GM10248 (cell line): ENCODE measurements at regions of chr5 and their contacts with region 1.

Region 1: GRCh38 chr5:65047948-65048690 is 279.4 kb downstream of the CWC27 start:
- DNase-seq: no peak
- CTCF ChIP-seq: no peak

Region 2: DNA sequence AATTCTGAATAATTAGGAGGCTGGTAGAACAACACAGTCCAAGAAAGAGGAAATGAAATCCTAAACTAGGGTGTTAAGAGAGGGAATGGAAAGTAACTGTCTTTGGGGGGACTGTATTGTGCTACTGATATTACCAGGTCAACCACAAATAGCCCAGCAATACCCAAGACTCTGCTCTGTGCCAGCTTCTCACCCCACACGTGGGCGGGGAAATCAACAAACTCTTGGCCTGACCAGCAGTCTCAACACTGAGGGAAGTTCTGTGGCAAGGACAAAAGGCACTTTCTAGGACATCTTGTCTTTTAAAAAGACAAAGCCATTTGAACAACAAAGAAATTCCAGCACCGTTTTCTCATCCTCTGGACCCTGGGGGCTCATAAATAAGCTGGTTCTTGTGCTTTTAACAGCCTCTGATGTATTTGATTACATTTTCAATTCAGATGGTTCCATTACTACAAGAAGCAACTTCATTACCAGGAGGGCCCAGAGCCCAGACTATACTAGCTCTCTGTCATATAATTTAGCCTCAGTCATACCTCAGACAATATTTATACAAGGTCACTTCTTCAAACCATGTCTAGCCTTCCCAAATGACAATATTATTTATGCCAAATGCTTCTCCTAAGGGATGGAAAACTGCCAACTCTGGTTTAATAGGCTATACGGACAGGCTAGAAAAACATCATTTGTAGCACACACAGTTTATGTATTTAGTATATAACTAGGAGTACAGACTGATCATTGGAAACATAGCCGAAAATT is 18.4 kb after region 1 on chr5:
- CTCF ChIA-PET with region 1: interaction called, 24 read pairs
- POLR2A ChIA-PET with region 1: interaction called, 5 read pairs
- DNase-seq: no peak
- CTCF ChIP-seq: no peak